Aorta (tissue), 5 donors: ENCODE measurements at regions of chr16 and their contacts with region 1.

Region 1: DNA sequence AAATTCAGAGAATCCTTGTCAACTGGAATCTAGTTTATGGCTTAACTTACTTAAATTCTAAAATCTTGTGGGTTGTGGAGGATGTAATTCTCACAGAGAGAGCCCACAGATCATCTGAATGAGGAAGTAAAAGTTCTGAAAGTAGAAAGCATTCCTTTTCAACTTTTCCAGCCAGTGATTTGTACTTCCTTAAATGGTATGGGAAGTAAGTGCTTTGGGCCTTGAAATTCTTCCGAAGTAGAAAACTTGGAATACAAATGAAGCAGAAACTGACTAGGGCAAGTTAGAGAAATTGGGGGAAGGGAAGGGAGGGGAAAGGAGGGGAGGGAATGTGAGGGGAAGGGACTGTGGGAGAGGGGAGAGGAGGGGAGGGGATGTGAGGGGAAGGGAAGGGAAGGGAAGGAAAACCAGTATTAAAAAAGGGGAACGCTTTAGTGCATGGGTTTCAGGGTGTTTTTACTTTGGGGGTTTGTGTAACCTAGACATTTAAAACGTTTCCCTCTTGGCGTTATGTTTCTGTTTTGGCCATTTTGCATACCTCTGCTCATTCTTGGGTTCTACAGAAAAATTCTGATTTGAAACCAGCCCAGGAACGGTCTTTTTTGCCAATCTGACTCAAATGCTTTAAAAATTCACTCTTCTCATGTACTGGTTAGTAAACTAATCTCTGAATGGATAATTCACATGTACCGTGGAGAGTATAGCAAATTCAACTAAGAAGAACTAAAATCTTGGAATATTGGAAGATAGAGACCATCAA is 15.5 kb upstream of the SNTB2 start:
- DNase-seq: no peak
- ATAC-seq: peak; percentile 49
- H3K4me3 ChIP-seq: peak overlapping the region in 1 of 2 donors; percentile 11
- H3K27ac ChIP-seq: peak overlapping the region; percentile 82 to 98
- H3K4me1 ChIP-seq: peaks cover 0 to 3% of the 10 kb centered on the region in 2 donors
- H3K27me3 ChIP-seq: no peaks in the 10 kb centered on the region

Region 2: DNA sequence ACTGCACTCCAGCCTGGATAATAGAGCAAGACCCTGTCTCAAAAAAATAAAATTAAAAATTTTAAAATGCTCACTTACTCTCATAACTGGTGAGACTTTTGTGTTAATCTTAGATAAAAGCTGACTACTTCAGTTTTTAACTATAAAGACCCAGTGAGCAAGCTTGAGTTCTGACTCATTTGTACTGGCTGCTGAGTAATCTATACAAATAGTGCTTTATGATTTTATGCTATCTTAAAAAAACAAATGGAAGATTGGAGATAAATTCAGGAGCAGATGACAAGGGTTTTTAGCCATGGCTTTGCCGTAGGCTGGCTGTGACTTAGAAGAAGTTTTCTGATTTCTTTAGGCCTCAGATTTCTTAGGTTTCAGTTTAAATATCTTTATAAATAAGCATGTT is 45.9 kb after region 1 on chr16:
- intact Hi-C with region 1: no loop called
- DNase-seq: no peak
- ATAC-seq: no peak
- H3K4me3 ChIP-seq: no peak overlapping the region
- H3K27ac ChIP-seq: no peak overlapping the region
- H3K4me1 ChIP-seq: no peaks in the 10 kb centered on the region
- H3K27me3 ChIP-seq: no peaks in the 10 kb centered on the region

Region 3: GRCh38 chr16:69276148-69277115 is 104.9 kb after region 1 on chr16:
- intact Hi-C with region 1: loop called in 1 of 2 experiments (anchors 5 kb)
- DNase-seq: peak; percentile 72 to 83
- ATAC-seq: peak; percentile 91
- H3K4me3 ChIP-seq: peak overlapping the region in 1 of 2 donors; percentile 34
- H3K27ac ChIP-seq: no peak overlapping the region
- H3K4me1 ChIP-seq: no peaks in the 10 kb centered on the region
- H3K27me3 ChIP-seq: no peaks in the 10 kb centered on the region